ENCODE measurements at regions of chr2 and their contacts with region 1.

Region 1: GRCh38 chr2:64644177-64645004 is 9.3 kb downstream of the SERTAD2 start:
- DNase-seq: peak; percentile 62
- ATAC-seq: peak; percentile 67
- H3K4me3 ChIP-seq: peak overlapping the region; percentile 46 to 65 (median 54)
- H3K27ac ChIP-seq: peak overlapping the region; percentile 70
- H3K4me1 ChIP-seq: peaks cover 100% of the 10 kb centered on the region
- H3K27me3 ChIP-seq: no peaks in the 10 kb centered on the region
- CTCF ChIP-seq: no peak
- EP300 ChIP-seq: no peak
- POLR2A ChIP-seq: peak in 1 of 2 experiments; percentile 36; a peak in 1 of 4 replicates
- RAD21 ChIP-seq: no peak

Region 2: DNA sequence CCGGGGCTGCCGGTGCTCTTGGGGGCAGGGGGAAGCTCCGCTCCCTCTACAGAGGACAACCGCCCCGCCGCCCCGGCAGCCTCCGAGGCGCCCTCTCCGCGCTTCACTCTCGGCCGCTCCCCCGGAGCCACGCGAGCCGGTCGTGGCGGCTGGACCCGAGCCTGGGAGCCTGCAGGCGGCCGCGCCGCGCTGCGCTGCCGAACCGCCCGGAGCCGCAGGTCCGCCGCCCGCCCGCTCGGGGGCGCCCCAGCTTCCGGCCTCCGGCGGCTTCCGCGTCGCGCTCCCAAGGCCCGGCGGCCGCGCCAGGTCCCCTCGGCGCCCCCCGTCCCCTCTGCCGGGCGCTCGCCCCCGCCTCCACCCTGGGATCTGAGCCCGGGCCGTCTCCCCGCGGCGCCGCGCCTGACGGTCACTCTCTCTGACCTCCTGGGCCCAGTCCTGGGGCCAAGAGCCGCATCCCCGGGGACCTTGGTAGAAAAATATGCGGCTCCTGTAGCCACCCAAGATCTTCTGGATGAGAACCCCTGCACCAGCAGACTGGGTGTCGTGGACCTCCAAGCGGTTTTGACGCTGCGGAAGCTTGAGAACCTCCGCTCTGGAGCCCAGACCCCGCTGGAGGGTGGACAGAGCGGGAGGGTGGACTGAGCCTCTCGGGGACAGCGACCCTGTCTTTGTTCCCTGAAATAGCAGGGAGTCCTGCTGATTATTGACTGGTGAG is 35.0 kb before region 1 on chr2:
- CTCF ChIA-PET with region 1: no interaction called
- POLR2A ChIA-PET with region 1: no interaction called
- in situ Hi-C with region 1: no loop called
- intact Hi-C with region 1: loop called (anchors 5 kb)
- DNase-seq: no peak
- ATAC-seq: peak; percentile 34
- H3K4me3 ChIP-seq: peak overlapping the region; percentile 51 to 68 (median 58); a peak in 5 of 6 replicates
- H3K27ac ChIP-seq: no peak overlapping the region
- H3K4me1 ChIP-seq: peaks cover 28% of the 10 kb centered on the region
- H3K27me3 ChIP-seq: no peaks in the 10 kb centered on the region
- CTCF ChIP-seq: no peak; the same call in 1 of the 2 replicates
- EP300 ChIP-seq: no peak
- POLR2A ChIP-seq: peak in 1 of 2 experiments; percentile 46; a peak in 1 of 4 replicates
- RAD21 ChIP-seq: peak; percentile 35; the same call in 1 of the 2 replicates

Region 3: DNA sequence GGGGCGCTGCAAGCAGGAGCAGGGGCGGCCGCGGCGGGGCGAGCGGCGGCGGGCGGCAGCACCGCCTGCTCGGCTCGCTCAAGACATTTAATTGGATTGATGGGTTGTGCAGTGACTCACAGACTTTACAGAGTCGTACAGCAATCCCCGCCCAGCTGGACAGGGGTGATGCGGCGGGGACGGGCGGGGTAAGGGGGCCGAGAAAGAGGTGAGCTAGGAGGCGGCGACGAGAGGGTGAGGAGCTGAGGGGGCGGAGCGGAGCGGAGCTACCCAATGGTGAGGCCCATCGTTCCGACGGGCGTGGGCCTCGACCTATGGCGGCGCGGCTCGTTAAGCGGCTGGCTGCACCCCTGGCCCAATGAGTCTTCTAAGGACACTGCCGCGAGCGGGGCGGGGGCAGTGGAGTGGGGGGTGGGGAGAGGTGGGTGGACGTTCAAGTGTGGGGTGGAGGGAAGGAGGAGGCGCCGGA is 106.5 kb after region 1 on chr2:
- CTCF ChIA-PET with region 1: interaction called, 3 read pairs
- POLR2A ChIA-PET with region 1: interaction called, 282 read pairs
- in situ Hi-C with region 1: no loop called
- intact Hi-C with region 1: loop called (anchors 1 kb)
- DNase-seq: peak; percentile 99
- ATAC-seq: peak; percentile 92
- H3K4me3 ChIP-seq: peak overlapping the region; percentile 80 to 93 (median 89)
- H3K27ac ChIP-seq: peak overlapping the region; percentile 80
- H3K4me1 ChIP-seq: peaks cover 42% of the 10 kb centered on the region
- H3K27me3 ChIP-seq: no peaks in the 10 kb centered on the region; a peak in 1 of 5 replicates
- CTCF ChIP-seq: no peak; the same call in 1 of the 2 replicates
- EP300 ChIP-seq: peak in 1 of 2 experiments; percentile 9; a peak in 2 of 4 replicates
- POLR2A ChIP-seq: peak; percentile 73 to 92
- RAD21 ChIP-seq: peak; percentile 59; the same call in 1 of the 2 replicates

Region 4: GRCh38 chr2:64831134-64831976 is 187.0 kb after region 1 on chr2:
- CTCF ChIA-PET with region 1: interaction called, 20 read pairs
- POLR2A ChIA-PET with region 1: interaction called, 18 read pairs
- in situ Hi-C with region 1: no loop called
- intact Hi-C with region 1: loop called (anchors 1 kb)
- DNase-seq: peak; percentile 88
- ATAC-seq: peak; percentile 93
- H3K4me3 ChIP-seq: peak overlapping the region; percentile 6 to 49 (median 7); a peak in 4 of 6 replicates
- H3K27ac ChIP-seq: peak overlapping the region; percentile 55
- H3K4me1 ChIP-seq: peaks cover 52% of the 10 kb centered on the region
- H3K27me3 ChIP-seq: peaks cover 0 to 13% of the 10 kb centered on the region in 2 experiments; a peak in 1 of 5 replicates
- CTCF ChIP-seq: peak; percentile 89
- EP300 ChIP-seq: peak in 1 of 2 experiments; percentile 76; a peak in 2 of 4 replicates
- POLR2A ChIP-seq: no peak; a peak in 1 of 4 replicates
- RAD21 ChIP-seq: peak; percentile 53

Region 5: DNA sequence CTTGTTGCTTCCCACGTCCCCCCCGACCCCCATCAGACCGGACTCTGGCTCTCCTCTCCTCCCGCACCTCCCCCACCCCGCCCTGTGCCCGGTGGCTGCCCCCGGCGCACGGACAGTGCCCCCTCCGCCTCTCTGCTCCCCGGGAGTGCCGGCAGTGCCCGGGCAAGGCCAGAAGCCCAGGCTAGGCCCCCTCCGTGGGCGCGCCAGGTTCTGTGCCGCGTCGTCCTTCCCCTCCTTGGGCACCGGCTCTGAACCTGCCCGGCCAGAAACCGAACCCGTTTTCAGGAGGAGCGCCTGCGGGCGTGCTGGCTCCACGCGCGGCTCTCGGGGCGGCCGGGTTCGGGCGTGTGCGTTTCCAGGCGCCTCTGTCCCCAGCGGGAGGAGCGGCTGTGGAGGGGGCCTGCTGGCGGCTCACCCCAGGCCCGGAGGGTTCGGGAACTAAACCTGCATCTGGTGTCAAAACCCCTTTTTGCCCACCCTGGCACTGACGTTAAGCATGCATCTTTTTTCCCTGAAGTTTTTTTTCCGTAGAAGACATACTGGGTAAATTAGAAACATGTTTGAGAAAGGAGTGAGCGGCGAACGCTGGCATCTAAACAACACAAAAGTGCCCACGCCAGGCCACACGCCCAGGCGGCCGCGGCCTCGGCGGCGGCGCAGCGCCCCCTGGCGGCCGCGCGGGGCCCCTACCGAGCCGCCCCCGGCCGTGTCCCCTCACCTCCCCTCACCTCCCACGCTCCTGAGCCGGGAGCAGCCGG is 220.9 kb after region 1 on chr2:
- CTCF ChIA-PET with region 1: interaction called, 22 read pairs
- POLR2A ChIA-PET with region 1: interaction called, 4 read pairs
- in situ Hi-C with region 1: loop called (anchors 5 kb)
- intact Hi-C with region 1: loop called (anchors 1 kb)
- DNase-seq: no peak
- ATAC-seq: peak; percentile 90
- H3K4me3 ChIP-seq: peak overlapping the region; percentile 78 to 86 (median 81)
- H3K27ac ChIP-seq: no peak overlapping the region
- H3K4me1 ChIP-seq: peaks cover 30% of the 10 kb centered on the region
- H3K27me3 ChIP-seq: peaks cover 5 to 61% of the 10 kb centered on the region in 2 experiments
- CTCF ChIP-seq: peak; percentile 60; the same call in 1 of the 2 replicates
- EP300 ChIP-seq: no peak
- POLR2A ChIP-seq: no peak
- RAD21 ChIP-seq: peak; percentile 98

Measured in HepG2 (cell line).